Pancreas (tissue), 10 donors: ENCODE measurements at regions of chr7 and their contacts with region 1.

Region 1: DNA sequence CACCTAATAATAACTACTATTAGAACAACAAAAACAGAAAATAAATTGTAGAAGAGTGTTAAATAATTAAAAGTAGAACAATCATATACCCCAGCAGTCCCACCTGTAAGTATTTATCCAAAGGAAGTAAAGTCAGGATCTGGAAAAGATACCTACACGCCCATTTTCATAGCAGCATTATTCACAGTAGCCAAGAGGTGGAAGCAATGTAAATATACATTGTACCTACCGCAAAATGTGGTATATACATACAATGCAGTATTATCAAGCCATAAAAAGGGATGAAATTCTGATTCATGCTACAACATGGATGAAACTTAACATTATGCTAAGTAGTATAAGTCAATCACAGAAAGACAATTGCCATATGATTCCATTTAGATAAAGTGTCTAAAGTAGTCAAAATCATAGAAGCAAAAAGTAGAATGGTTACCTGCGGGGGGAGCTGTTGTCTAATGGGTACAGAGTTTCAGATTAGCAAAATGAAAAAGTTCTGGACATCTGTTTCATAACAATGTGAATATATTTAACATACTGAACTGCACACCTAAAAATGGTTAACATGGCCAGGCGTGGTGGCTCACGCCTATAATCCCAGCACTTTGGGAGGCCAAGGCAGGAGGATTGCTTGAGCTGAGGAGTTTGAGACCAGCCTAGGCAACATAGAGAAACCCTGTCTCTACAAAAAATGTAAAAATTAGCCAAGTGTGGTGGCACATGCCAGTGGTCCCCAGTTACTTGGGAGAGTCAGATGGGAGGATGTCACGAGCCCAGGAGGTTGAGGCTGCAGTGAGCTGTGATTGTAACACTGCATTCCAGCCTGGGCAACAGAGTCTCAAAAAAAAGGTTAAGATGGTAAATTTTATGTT is 6.0 kb upstream of the TMED4 start:
- DNase-seq: peak in 3 of 6 donors; percentile 43 to 59 (median 48)
- ATAC-seq: peak; percentile 81 to 95 (median 92)
- H3K4me3 ChIP-seq: no peak overlapping the region
- H3K27ac ChIP-seq: no peak overlapping the region
- H3K4me1 ChIP-seq: peaks cover 0 to 5% (median 1%) of the 10 kb centered on the region in 3 donors
- H3K27me3 ChIP-seq: no peaks in the 10 kb centered on the region
- CTCF ChIP-seq: peak in 3 of 4 donors; percentile 27 to 43 (median 40)

Region 2: DNA sequence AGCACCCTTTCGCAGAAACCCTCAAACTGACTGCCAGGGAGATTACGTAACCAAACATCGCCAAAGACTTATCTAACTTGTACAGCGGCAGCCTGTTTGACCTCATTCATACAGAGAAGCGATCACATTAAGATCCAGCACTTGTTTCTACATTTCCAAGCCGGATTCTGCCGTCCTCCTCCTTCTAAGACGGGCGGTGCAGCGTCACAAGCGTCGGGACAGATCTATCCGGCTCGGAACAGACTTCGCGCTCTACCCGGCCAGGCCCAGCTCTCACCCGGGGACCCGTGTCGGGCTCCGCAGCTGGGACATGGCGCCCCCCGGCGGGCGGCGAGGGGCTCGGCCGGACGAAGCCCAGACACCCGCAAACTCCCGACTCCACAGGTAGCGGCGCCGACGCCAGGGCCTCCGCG is 259.4 kb after region 1 on chr7:
- intact Hi-C with region 1: loop called in 1 of 3 experiments (anchors 5 kb)
- DNase-seq: peak; percentile 79 to 92 (median 88)
- ATAC-seq: peak; percentile 72 to 81 (median 76)
- H3K4me3 ChIP-seq: peak overlapping the region; percentile 65 to 77 (median 71)
- H3K27ac ChIP-seq: peak overlapping the region; percentile 87 to 99 (median 96)
- H3K4me1 ChIP-seq: peaks cover 0 to 22% (median 17%) of the 10 kb centered on the region in 3 donors
- H3K27me3 ChIP-seq: no peaks in the 10 kb centered on the region
- CTCF ChIP-seq: peak; percentile 67 to 83 (median 76)